Activated B cell treated with CpG ODN at 0.5 μM for 24 hours (primary cell): ENCODE measurements at regions of chr12 and their contacts with region 1.

Region 1: GRCh38 chr12:122895705-122896636 is at the start of gene VPS37B:
- DNase-seq: peak; percentile 87
- ATAC-seq: peak; percentile 40
- H3K4me3 Mint-ChIP-seq: peak within 1 kb of the TSS; percentile 97
- H3K27ac Mint-ChIP-seq: peak within 1 kb of the TSS; percentile 92
- H3K4me1 Mint-ChIP-seq: peaks cover 96% of the 10 kb centered on the region
- H3K27me3 Mint-ChIP-seq: no peaks in the 10 kb centered on the region
- CTCF ChIP-seq: no peak
- total RNA-seq, gene VPS37B: 51.4 and 54.1 TPM in 2 replicates

Region 2: DNA sequence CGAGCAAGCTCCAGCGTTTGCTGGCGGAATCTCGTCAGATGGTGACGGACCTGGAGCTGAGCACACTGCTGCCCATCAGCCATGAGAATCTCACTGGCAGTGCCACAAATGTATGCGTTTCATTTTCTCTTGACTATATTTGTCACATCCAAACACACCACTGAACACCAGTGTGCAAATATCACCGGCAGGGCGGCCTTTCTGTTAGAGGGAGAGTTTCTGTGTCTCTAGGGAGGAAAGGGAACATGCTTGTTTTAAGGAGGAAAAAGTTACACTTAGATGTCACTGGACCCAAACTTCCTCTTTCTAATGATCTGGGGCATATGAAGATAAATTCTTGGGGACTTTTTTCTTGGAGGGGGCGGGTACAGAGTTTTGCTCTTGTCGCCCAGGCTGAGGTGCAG is 82.7 kb before region 1 on chr12:
- CTCF ChIA-PET with region 1: no interaction called
- POLR2A ChIA-PET with region 1: interaction called, 10 read pairs
- intact Hi-C with region 1: loop called (anchors 1 kb)
- DNase-seq: peak; percentile 54
- ATAC-seq: peak; percentile 95
- H3K4me3 Mint-ChIP-seq: peak overlapping the region; percentile 86
- H3K27ac Mint-ChIP-seq: peak overlapping the region; percentile 98
- H3K4me1 Mint-ChIP-seq: peaks cover 53% of the 10 kb centered on the region
- H3K27me3 Mint-ChIP-seq: no peaks in the 10 kb centered on the region
- CTCF ChIP-seq: no peak

Region 3: GRCh38 chr12:122871851-122872780 is 23.9 kb before region 1 on chr12:
- CTCF ChIA-PET with region 1: interaction called, 3 read pairs
- POLR2A ChIA-PET with region 1: interaction called, 47 read pairs
- intact Hi-C with region 1: loop called (anchors 1 kb)
- DNase-seq: peak; percentile 46
- ATAC-seq: peak; percentile 66
- H3K4me3 Mint-ChIP-seq: peak overlapping the region; percentile 84
- H3K27ac Mint-ChIP-seq: peak overlapping the region; percentile 93
- H3K4me1 Mint-ChIP-seq: peaks cover 91% of the 10 kb centered on the region
- H3K27me3 Mint-ChIP-seq: no peaks in the 10 kb centered on the region
- CTCF ChIP-seq: no peak

Region 4: DNA sequence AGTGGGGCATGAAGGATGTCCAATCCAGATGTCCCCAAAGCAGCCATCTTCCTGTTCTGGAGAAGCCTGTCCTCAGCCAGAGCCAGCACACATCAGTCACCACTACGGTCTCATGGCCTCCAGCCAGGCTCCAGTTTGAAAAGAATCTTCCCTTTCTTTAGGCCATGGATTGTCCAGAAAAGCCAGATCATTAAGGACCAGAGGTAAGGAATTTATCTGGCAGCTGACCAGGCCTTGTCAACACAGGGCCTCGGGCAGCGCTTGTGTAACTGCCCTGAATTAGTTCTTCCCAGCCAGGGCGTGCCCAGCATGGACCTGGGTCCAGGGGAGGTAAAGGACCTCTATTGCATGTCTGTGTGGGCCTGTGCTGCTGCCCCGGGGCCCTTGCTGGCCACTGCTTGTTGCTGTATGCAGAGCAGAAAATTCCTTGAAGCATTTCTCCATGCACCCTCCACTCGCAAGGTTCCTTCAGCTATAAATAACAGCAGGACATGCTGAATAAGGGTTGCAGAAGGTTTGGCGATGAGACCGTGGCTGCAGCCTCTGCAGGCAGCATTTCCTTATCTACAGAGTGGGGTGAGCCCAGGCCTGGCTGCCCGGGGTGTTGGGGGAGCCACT is 21.6 kb after region 1 on chr12:
- CTCF ChIA-PET with region 1: no interaction called
- POLR2A ChIA-PET with region 1: interaction called, 12 read pairs
- intact Hi-C with region 1: no loop called
- DNase-seq: no peak
- ATAC-seq: no peak
- H3K4me3 Mint-ChIP-seq: no peak overlapping the region
- H3K27ac Mint-ChIP-seq: no peak overlapping the region
- H3K4me1 Mint-ChIP-seq: peaks cover 10% of the 10 kb centered on the region
- H3K27me3 Mint-ChIP-seq: no peaks in the 10 kb centered on the region
- CTCF ChIP-seq: no peak

Region 5: GRCh38 chr12:122946690-122947341 is 50.8 kb after region 1 on chr12:
- CTCF ChIA-PET with region 1: interaction called, 25 read pairs
- POLR2A ChIA-PET with region 1: interaction called, 47 read pairs
- intact Hi-C with region 1: loop called (anchors 1 kb)
- DNase-seq: peak; percentile 52
- ATAC-seq: peak; percentile 81
- H3K4me3 Mint-ChIP-seq: peak overlapping the region; percentile 57
- H3K27ac Mint-ChIP-seq: peak overlapping the region; percentile 68
- H3K4me1 Mint-ChIP-seq: peaks cover 48% of the 10 kb centered on the region
- H3K27me3 Mint-ChIP-seq: no peaks in the 10 kb centered on the region
- CTCF ChIP-seq: no peak

Region 6: GRCh38 chr12:123115409-123116121 is 219.6 kb after region 1 on chr12:
- CTCF ChIA-PET with region 1: no interaction called
- POLR2A ChIA-PET with region 1: no interaction called
- intact Hi-C with region 1: no loop called
- DNase-seq: peak; percentile 32
- ATAC-seq: peak; percentile 70
- H3K4me3 Mint-ChIP-seq: peak overlapping the region; percentile 29
- H3K27ac Mint-ChIP-seq: peak overlapping the region; percentile 75
- H3K4me1 Mint-ChIP-seq: peaks cover 81% of the 10 kb centered on the region
- H3K27me3 Mint-ChIP-seq: no peaks in the 10 kb centered on the region
- CTCF ChIP-seq: no peak